Esophagus squamous epithelium (tissue), 5 donors: ENCODE measurements at regions of chr17 and their contacts with region 1.

Region 1: GRCh38 chr17:73156166-73156840 is 8.5 kb upstream of the SSTR2 start:
- DNase-seq: no peak
- H3K4me3 ChIP-seq: no peak overlapping the region
- H3K27ac ChIP-seq: no peak overlapping the region
- H3K4me1 ChIP-seq: peaks cover 0 to 11% (median 6%) of the 10 kb centered on the region in 3 donors
- H3K27me3 ChIP-seq: peaks cover 0 to 44% (median 0%) of the 10 kb centered on the region in 4 donors
- CTCF ChIP-seq: peak in 5 of 6 experiments; percentile 75 to 90 (median 80)
- POLR2A ChIP-seq: no peak

Region 2: DNA sequence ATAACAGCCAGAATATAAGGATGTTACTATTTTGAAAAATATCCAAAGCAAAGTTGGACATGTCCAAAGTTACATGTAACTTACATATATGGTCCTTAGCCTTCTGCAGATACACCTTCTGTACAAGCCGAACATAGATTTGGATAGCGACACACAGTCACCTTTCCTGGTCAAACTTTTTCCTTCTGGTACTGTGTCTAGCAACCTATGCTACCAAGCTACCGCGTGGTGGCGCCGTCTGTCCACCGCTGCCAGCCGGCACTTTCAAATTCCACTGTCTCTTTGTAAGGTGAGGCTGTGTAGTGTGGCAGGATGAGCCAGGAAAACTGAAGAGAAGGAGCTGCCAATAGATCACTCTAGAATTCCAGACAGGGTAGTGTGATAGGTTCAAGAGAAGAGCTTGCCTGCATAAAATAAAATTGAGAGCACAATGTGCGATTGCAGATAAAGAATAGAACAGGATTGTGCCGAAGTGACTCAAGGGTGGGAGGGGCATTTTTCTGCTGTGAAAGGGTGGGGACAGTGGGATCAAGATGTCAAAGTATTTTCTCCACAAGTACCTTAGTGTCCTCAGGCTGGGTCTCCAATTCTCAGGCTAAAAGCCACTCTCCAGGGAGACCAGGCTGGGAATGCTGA is 430.8 kb before region 1 on chr17:
- intact Hi-C with region 1: loop called (anchors 5 kb)
- DNase-seq: no peak
- H3K4me3 ChIP-seq: no peak overlapping the region
- H3K27ac ChIP-seq: no peak overlapping the region
- H3K4me1 ChIP-seq: no peaks in the 10 kb centered on the region
- H3K27me3 ChIP-seq: no peaks in the 10 kb centered on the region
- CTCF ChIP-seq: peak; percentile 44 to 88 (median 76)
- POLR2A ChIP-seq: no peak

Region 3: GRCh38 chr17:72985881-72986720 is 170.2 kb before region 1 on chr17:
- intact Hi-C with region 1: loop called (anchors 5 kb)
- DNase-seq: no peak
- H3K4me3 ChIP-seq: no peak overlapping the region
- H3K27ac ChIP-seq: no peak overlapping the region
- H3K4me1 ChIP-seq: no peaks in the 10 kb centered on the region
- H3K27me3 ChIP-seq: no peaks in the 10 kb centered on the region
- CTCF ChIP-seq: peak; percentile 62 to 91 (median 79)
- POLR2A ChIP-seq: no peak